Left lung (tissue), 14 donors: ENCODE measurements at regions of chr1 and their contacts with region 1.

Region 1: DNA sequence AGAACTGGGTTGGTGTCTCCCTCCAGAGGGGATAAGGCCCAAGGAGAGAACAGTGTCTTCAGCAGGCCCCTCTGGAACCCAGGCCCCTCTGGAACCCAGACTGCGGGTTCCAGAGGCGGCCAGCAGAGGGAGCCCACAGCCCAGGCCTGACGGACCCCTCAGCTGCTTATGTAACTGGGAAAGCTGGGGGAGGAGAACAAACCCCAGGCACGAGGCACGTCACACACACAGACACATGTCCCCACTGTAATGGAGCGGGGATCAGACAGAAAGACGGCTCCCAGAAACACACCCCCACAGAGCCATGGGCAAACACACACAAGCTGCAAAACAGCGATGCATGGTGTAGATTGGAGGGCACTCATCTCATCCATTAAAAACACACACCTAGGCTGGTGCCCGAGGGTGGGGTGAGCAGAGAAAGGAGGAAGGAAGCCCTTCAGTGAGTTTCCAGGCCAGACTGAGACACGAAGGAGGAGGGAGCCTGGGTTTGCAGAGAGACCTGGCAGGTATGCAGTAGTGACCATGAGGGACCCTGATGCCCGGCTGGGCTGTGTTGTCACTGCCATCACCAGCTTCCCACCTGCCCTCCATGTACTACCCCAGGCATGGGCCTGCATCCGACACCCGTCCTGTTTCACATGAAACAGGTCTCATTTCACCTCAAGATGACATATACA is 2.8 kb upstream of the IGSF8 start:
- DNase-seq: peak; percentile 67 to 91 (median 82)
- ATAC-seq: peak; percentile 44
- H3K4me3 ChIP-seq: no peak overlapping the region
- H3K27ac ChIP-seq: no peak overlapping the region
- H3K4me1 ChIP-seq: peaks cover 0 to 37% of the 10 kb centered on the region in 2 donors
- H3K27me3 ChIP-seq: no peaks in the 10 kb centered on the region
- CTCF ChIP-seq: peak; percentile 89 to 92

Region 2: GRCh38 chr1:160058087-160058486 is 43.1 kb before region 1 on chr1:
- intact Hi-C with region 1: no loop called
- DNase-seq: no peak
- ATAC-seq: peak; percentile 21
- H3K4me3 ChIP-seq: no peak overlapping the region
- H3K27ac ChIP-seq: no peak overlapping the region
- H3K4me1 ChIP-seq: no peaks in the 10 kb centered on the region
- H3K27me3 ChIP-seq: peaks cover 0 to 44% of the 10 kb centered on the region in 2 donors
- CTCF ChIP-seq: no peak

Region 3: GRCh38 chr1:160193091-160193819 is 92.1 kb after region 1 on chr1:
- intact Hi-C with region 1: loop called in 1 of 2 experiments (anchors 10 kb)
- DNase-seq: peak; percentile 81 to 92 (median 84)
- ATAC-seq: peak; percentile 99
- H3K4me3 ChIP-seq: no peak overlapping the region
- H3K27ac ChIP-seq: no peak overlapping the region
- H3K4me1 ChIP-seq: peaks cover 8 to 13% of the 10 kb centered on the region in 2 donors
- H3K27me3 ChIP-seq: no peaks in the 10 kb centered on the region
- CTCF ChIP-seq: peak; percentile 95 to 98

Region 4: GRCh38 chr1:160251687-160252526 is 150.7 kb after region 1 on chr1:
- intact Hi-C with region 1: loop called in 1 of 2 experiments (anchors 2 kb)
- DNase-seq: peak in 3 of 4 donors; percentile 54 to 82 (median 58)
- ATAC-seq: peak; percentile 96
- H3K4me3 ChIP-seq: no peak overlapping the region
- H3K27ac ChIP-seq: no peak overlapping the region
- H3K4me1 ChIP-seq: peaks cover 0 to 8% of the 10 kb centered on the region in 2 donors
- H3K27me3 ChIP-seq: no peaks in the 10 kb centered on the region
- CTCF ChIP-seq: peak; percentile 64 to 68

Region 5: GRCh38 chr1:160291248-160292220 is 190.4 kb after region 1 on chr1:
- intact Hi-C with region 1: loop called in 1 of 2 experiments (anchors 5 kb)
- DNase-seq: peak in 3 of 4 donors; percentile 42 to 74 (median 53)
- ATAC-seq: peak; percentile 97
- H3K4me3 ChIP-seq: no peak overlapping the region
- H3K27ac ChIP-seq: peak overlapping the region in 1 of 2 donors; percentile 21
- H3K4me1 ChIP-seq: no peaks in the 10 kb centered on the region
- H3K27me3 ChIP-seq: no peaks in the 10 kb centered on the region
- CTCF ChIP-seq: peak; percentile 77